Naive thymus-derived CD4-positive, alpha-beta T cell (primary cell): ENCODE measurements at regions of chr7 and their contacts with region 1.

Region 1: GRCh38 chr7:53920011-53920410 is 622.2 kb upstream of the VSTM2A start:
- DNase-seq: no peak
- ATAC-seq: no peak
- H3K4me3 ChIP-seq: no peak overlapping the region
- H3K4me3 Mint-ChIP-seq: no peak overlapping the region
- H3K27ac ChIP-seq: no peak overlapping the region
- H3K27ac Mint-ChIP-seq: no peak overlapping the region
- H3K4me1 ChIP-seq: no peaks in the 10 kb centered on the region
- H3K4me1 Mint-ChIP-seq: no peaks in the 10 kb centered on the region
- H3K27me3 ChIP-seq: no peaks in the 10 kb centered on the region
- H3K27me3 Mint-ChIP-seq: no peaks in the 10 kb centered on the region

Region 2: DNA sequence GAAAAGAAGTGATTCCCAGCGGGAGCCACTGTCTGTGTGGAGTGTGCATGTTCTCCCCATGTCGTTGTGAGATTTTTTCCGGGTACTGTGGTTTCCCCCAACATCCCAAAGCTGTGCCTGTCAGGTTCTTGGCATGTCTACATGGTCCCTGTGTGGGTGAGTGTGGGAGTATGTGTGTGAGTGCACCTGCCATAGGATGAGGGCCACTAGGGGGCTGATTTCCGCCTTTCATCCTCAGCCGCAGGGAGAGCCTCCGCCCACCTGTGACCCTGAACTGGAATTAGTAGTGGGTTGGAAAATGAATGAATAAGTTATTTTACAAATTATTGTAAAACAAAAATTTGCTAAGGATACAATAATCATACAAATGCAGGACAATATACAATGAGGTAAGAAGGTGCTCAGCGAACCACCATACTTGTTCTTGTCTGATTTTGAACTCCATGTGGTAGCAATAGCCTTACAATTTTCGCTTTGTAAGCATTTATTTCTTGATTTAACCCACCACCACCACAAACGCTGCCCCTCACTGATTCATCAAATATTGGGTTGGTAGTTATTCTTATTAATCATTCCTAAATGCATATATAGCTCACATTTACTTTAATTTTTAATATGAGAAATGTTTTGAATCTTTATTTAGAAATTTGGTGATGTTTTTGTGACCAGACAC is 19.0 kb before region 1 on chr7:
- CTCF ChIA-PET with region 1: no interaction called
- POLR2A ChIA-PET with region 1: no interaction called
- intact Hi-C with region 1: no loop called
- DNase-seq: no peak
- ATAC-seq: no peak
- H3K4me3 ChIP-seq: no peak overlapping the region
- H3K4me3 Mint-ChIP-seq: no peak overlapping the region
- H3K27ac ChIP-seq: no peak overlapping the region
- H3K27ac Mint-ChIP-seq: no peak overlapping the region
- H3K4me1 ChIP-seq: no peaks in the 10 kb centered on the region
- H3K4me1 Mint-ChIP-seq: no peaks in the 10 kb centered on the region
- H3K27me3 ChIP-seq: no peaks in the 10 kb centered on the region
- H3K27me3 Mint-ChIP-seq: no peaks in the 10 kb centered on the region

Region 3: GRCh38 chr7:53940483-53940882 is 20.5 kb after region 1 on chr7:
- CTCF ChIA-PET with region 1: no interaction called
- POLR2A ChIA-PET with region 1: no interaction called
- intact Hi-C with region 1: no loop called
- DNase-seq: no peak
- ATAC-seq: no peak
- H3K4me3 ChIP-seq: no peak overlapping the region
- H3K4me3 Mint-ChIP-seq: no peak overlapping the region
- H3K27ac ChIP-seq: no peak overlapping the region
- H3K27ac Mint-ChIP-seq: no peak overlapping the region
- H3K4me1 ChIP-seq: no peaks in the 10 kb centered on the region
- H3K4me1 Mint-ChIP-seq: no peaks in the 10 kb centered on the region
- H3K27me3 ChIP-seq: no peaks in the 10 kb centered on the region
- H3K27me3 Mint-ChIP-seq: no peaks in the 10 kb centered on the region

Region 4: GRCh38 chr7:53965716-53966115 is 45.7 kb after region 1 on chr7:
- CTCF ChIA-PET with region 1: no interaction called
- POLR2A ChIA-PET with region 1: no interaction called
- intact Hi-C with region 1: no loop called
- DNase-seq: no peak
- ATAC-seq: no peak
- H3K4me3 ChIP-seq: no peak overlapping the region
- H3K4me3 Mint-ChIP-seq: no peak overlapping the region
- H3K27ac ChIP-seq: no peak overlapping the region
- H3K27ac Mint-ChIP-seq: no peak overlapping the region
- H3K4me1 ChIP-seq: no peaks in the 10 kb centered on the region
- H3K4me1 Mint-ChIP-seq: no peaks in the 10 kb centered on the region
- H3K27me3 ChIP-seq: no peaks in the 10 kb centered on the region
- H3K27me3 Mint-ChIP-seq: no peaks in the 10 kb centered on the region

Region 5: DNA sequence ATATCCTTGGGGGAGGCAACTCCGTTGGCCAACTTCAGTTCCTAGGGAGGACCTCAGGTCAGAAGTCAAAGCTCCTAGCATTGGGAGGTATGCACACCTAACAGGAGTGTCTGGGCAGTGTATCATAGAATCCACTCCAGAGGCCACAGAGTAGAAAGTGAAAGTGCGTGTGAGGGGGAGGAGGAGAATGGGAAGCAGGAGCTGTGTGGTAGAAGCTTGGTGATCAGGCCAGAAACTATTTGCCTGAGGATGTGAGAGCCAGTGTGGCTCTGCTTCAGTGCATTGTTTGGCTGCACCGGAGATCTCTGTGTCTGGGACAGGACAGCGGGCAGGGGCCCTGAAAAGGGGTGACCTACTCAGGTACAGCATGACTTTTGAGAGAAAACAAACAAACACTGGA is 64.8 kb after region 1 on chr7:
- CTCF ChIA-PET with region 1: no interaction called
- POLR2A ChIA-PET with region 1: no interaction called
- intact Hi-C with region 1: loop called in 1 of 2 experiments (anchors 10 kb)
- DNase-seq: no peak
- ATAC-seq: no peak
- H3K4me3 ChIP-seq: no peak overlapping the region
- H3K4me3 Mint-ChIP-seq: no peak overlapping the region
- H3K27ac ChIP-seq: no peak overlapping the region
- H3K27ac Mint-ChIP-seq: no peak overlapping the region
- H3K4me1 ChIP-seq: no peaks in the 10 kb centered on the region
- H3K4me1 Mint-ChIP-seq: no peaks in the 10 kb centered on the region
- H3K27me3 ChIP-seq: no peaks in the 10 kb centered on the region
- H3K27me3 Mint-ChIP-seq: no peaks in the 10 kb centered on the region

Region 6: GRCh38 chr7:54080971-54081370 is 161.0 kb after region 1 on chr7:
- CTCF ChIA-PET with region 1: no interaction called
- POLR2A ChIA-PET with region 1: no interaction called
- intact Hi-C with region 1: no loop called
- DNase-seq: no peak
- ATAC-seq: no peak
- H3K4me3 ChIP-seq: no peak overlapping the region
- H3K4me3 Mint-ChIP-seq: no peak overlapping the region
- H3K27ac ChIP-seq: no peak overlapping the region
- H3K27ac Mint-ChIP-seq: no peak overlapping the region
- H3K4me1 ChIP-seq: no peaks in the 10 kb centered on the region
- H3K4me1 Mint-ChIP-seq: no peaks in the 10 kb centered on the region
- H3K27me3 ChIP-seq: no peaks in the 10 kb centered on the region
- H3K27me3 Mint-ChIP-seq: no peaks in the 10 kb centered on the region